ENCODE measurements at regions of chr14 and their contacts with region 1.

Region 1: DNA sequence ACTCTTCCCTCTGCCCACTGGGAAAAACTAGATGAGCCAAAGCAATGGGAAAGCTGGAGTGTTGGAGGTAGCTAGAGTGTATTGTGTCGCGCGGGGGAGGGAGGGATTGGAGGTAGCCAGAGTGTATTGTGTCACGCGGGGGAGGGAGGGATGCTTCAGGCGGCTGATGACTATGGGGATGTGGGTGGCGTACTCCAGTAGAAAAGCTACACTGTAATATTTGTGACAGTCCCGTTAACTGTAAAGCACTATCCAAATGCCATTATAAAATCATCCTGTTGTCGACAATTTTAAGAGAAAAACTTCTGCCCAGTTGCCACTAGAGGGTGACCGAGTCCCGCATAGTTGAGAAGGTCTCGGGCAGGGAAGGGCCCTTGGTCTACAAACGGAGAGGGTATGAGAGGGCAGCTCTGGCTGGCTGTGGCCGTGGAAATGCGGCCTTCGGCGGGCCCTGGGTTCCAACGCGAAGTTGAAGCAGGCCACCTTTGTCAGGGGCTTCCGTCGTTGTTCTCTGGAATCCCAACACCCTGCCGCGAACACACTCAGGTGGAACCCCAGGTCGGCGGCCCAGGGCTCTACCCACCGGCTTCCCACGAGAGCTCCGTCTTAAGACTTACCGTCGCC is 15.1 kb upstream of the PLEK2 start:
- DNase-seq: peak; percentile 84 to 85
- H3K4me3 ChIP-seq: no peak overlapping the region
- H3K4me3 Mint-ChIP-seq: no peak overlapping the region
- H3K27ac Mint-ChIP-seq: no peak overlapping the region
- H3K4me1 ChIP-seq: peaks cover 27% of the 10 kb centered on the region
- H3K4me1 Mint-ChIP-seq: peaks cover 10% of the 10 kb centered on the region
- H3K27me3 ChIP-seq: no peaks in the 10 kb centered on the region
- H3K27me3 Mint-ChIP-seq: no peaks in the 10 kb centered on the region
- CTCF ChIP-seq: peak; percentile 78 to 82

Region 2: GRCh38 chr14:67285876-67286452 is 141.1 kb before region 1 on chr14:
- CTCF ChIA-PET with region 1: no interaction called
- POLR2A ChIA-PET with region 1: no interaction called
- intact Hi-C with region 1: no loop called
- DNase-seq: peak in 1 of 2 experiments; percentile 25
- H3K4me3 ChIP-seq: no peak overlapping the region
- H3K4me3 Mint-ChIP-seq: no peak overlapping the region
- H3K27ac Mint-ChIP-seq: no peak overlapping the region
- H3K4me1 ChIP-seq: no peaks in the 10 kb centered on the region
- H3K4me1 Mint-ChIP-seq: no peaks in the 10 kb centered on the region
- H3K27me3 ChIP-seq: no peaks in the 10 kb centered on the region
- H3K27me3 Mint-ChIP-seq: no peaks in the 10 kb centered on the region
- CTCF ChIP-seq: peak; percentile 37 to 61

Region 3: DNA sequence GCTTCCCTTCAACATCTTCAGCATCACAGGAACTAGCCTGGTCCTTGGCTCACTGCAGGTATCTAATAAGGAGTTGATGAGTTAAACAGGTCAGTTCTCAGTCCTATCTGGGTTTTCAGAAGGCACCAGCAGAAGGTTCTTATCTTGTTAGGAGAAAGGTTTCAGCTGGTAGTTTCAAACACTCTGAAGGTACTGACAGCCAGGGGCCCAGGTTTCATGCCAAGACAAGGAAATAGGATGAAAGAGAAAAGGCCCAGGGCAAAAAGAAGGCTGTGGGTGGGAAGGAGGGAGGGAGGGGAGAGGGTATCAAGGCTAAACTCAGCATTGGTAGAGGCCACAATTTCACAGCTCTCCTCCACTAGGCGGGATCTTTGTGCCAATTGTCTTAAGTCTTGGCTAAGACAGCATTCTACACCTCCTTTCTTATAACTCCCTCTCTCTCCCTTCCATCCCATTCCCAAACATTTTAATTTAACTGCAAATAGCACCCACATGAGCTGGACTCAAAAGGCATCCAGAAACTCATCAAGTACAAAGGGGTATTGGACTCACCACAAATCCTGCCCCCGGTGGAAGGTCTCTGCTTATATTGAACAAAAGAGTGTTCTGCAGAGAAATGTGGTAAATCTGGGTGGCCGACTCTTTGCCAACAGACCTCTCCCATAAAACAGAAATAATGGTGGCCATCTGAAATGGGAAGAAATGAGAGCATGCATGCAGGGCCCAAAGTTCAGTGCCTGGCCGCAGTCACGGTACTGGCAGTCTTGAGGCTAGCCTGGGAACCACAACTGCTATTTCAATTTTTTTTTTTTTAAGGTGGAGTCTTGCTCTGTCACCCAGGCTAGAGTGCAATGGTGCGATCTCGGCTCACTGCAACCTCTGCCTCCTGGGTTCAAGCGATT is 40.3 kb after region 1 on chr14:
- CTCF ChIA-PET with region 1: interaction called, 18 read pairs
- POLR2A ChIA-PET with region 1: interaction called, 8 read pairs
- intact Hi-C with region 1: loop called (anchors 1 kb)
- DNase-seq: peak in 1 of 2 experiments; percentile 43
- H3K4me3 ChIP-seq: no peak overlapping the region
- H3K4me3 Mint-ChIP-seq: no peak overlapping the region
- H3K27ac Mint-ChIP-seq: no peak overlapping the region
- H3K4me1 ChIP-seq: no peaks in the 10 kb centered on the region
- H3K4me1 Mint-ChIP-seq: no peaks in the 10 kb centered on the region
- H3K27me3 ChIP-seq: no peaks in the 10 kb centered on the region
- H3K27me3 Mint-ChIP-seq: no peaks in the 10 kb centered on the region
- CTCF ChIP-seq: peak; percentile 3 to 23

Region 4: DNA sequence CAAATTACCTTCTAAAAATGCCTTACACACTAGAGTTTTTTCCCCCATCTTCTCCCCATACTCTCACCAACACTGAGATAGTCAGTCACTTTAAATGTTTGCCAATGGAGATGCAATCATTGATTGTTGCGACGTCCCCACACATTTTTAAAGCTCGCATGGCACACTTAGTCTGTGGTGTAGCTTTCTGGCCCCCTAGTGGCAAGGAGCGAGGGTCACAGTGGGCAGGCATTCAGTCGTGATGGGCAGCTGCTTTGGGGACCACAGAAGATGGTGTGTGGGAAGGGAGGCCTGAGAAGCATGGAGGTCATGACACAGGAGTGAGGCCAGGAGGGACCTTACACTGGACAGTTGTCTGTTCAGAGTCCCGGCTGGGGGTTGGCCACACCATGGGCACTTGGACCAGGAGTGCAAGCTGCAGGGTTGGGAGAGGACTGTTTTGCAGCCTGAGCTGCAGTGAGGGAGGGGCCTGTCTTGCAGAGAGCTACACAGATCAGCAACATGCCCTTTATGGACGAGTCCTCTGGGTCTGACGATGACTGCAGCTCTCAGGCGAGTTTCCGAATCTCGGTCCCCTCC is 144.3 kb after region 1 on chr14:
- CTCF ChIA-PET with region 1: interaction called, 49 read pairs
- POLR2A ChIA-PET with region 1: no interaction called
- intact Hi-C with region 1: loop called (anchors 1 kb)
- DNase-seq: peak; percentile 68 to 77
- H3K4me3 ChIP-seq: no peak overlapping the region
- H3K4me3 Mint-ChIP-seq: no peak overlapping the region
- H3K27ac Mint-ChIP-seq: no peak overlapping the region
- H3K4me1 ChIP-seq: 0 out of 2 replicates have a peak, but pooled peaks cover 4% of the 10 kb centered on the region
- H3K4me1 Mint-ChIP-seq: peaks cover 14% of the 10 kb centered on the region
- H3K27me3 ChIP-seq: no peaks in the 10 kb centered on the region
- H3K27me3 Mint-ChIP-seq: no peaks in the 10 kb centered on the region
- CTCF ChIP-seq: peak; percentile 84 to 88

Region 5: GRCh38 chr14:67666750-67667449 is 239.8 kb after region 1 on chr14:
- CTCF ChIA-PET with region 1: interaction called, 5 read pairs
- POLR2A ChIA-PET with region 1: no interaction called
- intact Hi-C with region 1: loop called (anchors 2 kb)
- DNase-seq: peak in 1 of 2 experiments; percentile 45
- H3K4me3 ChIP-seq: no peak overlapping the region
- H3K4me3 Mint-ChIP-seq: no peak overlapping the region
- H3K27ac Mint-ChIP-seq: no peak overlapping the region
- H3K4me1 ChIP-seq: no peaks in the 10 kb centered on the region
- H3K4me1 Mint-ChIP-seq: no peaks in the 10 kb centered on the region
- H3K27me3 ChIP-seq: no peaks in the 10 kb centered on the region
- H3K27me3 Mint-ChIP-seq: no peaks in the 10 kb centered on the region
- CTCF ChIP-seq: peak; percentile 58 to 62